Activated T-helper 1 cell treated with anti-CD3 and anti-CD28 coated beads, Interleukin-12 subunit alpha, Interleukin-12 subunit beta, Interleukin-2, Interleukin-4 antibody, amounts not matched to agents 30 ng/mL and 10 ng/mL and 1 ng/mL, durations not matched to agents 14 hours and 24 hours and 36 hours (primary cell): ENCODE measurements at regions of chr9 and their contacts with region 1.

Region 1: DNA sequence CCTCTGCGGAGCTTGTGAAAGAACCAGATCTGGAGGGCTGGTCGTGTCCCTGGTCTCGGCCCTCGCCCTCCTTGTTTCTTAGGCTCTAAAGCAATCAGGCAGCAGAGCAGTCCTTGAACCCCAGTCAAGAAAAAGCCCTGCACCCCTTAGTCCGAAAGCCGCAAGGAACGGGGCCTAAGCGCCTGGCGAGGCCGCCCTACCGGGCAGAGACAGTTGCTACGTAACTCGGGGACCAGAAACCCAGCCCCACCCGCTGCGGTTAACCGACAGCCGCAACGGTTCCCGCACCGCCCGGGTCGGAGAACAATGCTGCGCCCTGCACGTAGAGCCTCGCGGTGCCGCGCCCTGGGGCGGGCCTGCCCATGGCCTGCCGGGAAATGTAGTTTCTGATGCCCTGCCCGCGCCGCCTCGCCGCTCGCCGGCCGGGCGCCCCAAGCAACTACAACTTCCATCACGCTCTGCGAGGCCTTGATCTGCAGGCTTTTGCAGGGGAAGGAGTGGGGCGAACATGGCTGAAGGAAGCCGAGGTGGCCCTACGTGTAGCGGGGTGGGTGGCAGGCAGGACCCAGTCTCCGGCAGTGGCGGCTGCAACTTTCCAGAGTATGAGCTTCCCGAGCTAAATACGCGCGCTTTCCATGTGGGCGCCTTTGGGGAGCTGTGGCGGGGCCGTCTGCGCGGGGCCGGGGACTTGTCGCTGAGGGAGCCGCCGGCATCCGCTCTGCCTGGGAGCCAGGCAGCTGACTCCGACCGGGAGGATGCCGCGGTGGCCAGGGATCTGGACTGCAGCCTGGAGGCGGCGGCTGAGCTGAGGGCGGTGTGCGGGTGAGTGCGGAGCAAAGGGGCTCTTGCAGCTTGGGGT is at the start of gene SNAPC3:
- DNase-seq: peak; percentile 94
- H3K4me3 Mint-ChIP-seq: peak within 1 kb of the TSS; percentile 96
- H3K27ac Mint-ChIP-seq: peak within 1 kb of the TSS; percentile 92
- H3K4me1 Mint-ChIP-seq: peaks cover 50% of the 10 kb centered on the region
- H3K27me3 Mint-ChIP-seq: peaks cover 3% of the 10 kb centered on the region
- total RNA-seq, gene SNAPC3: 27.1 and 30.5 TPM in 2 replicates

Region 2: DNA sequence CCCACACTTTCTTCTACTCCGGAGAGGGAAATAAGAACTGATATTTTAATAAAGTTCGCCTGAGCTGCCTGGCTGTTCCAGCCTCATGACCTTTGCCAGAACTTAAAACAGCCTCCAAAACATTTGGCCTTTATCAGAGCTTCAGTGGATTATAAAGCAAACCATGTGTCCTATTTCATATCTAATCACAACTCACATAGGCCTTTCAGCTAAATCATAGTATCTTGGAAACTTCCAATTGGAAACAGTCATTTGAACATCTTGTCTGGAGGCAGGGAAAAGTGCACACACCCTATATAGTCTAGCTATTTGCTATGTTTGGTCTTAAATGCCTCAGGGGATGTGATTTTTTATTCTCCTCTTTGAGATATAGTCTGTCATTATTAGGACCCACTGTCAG is 466.4 kb before region 1 on chr9:
- intact Hi-C with region 1: loop called (anchors 5 kb)
- DNase-seq: no peak
- H3K4me3 Mint-ChIP-seq: no peak overlapping the region
- H3K27ac Mint-ChIP-seq: no peak overlapping the region
- H3K4me1 Mint-ChIP-seq: peaks cover 39% of the 10 kb centered on the region
- H3K27me3 Mint-ChIP-seq: peaks cover 10% of the 10 kb centered on the region

Region 3: GRCh38 chr9:15191378-15191777 is 231.2 kb before region 1 on chr9:
- intact Hi-C with region 1: loop called (anchors 1 kb)
- DNase-seq: no peak
- H3K4me3 Mint-ChIP-seq: peak overlapping the region; percentile 45
- H3K27ac Mint-ChIP-seq: peak overlapping the region; percentile 49
- H3K4me1 Mint-ChIP-seq: peaks cover 24% of the 10 kb centered on the region
- H3K27me3 Mint-ChIP-seq: no peaks in the 10 kb centered on the region

Region 4: GRCh38 chr9:15277400-15278090 is 145.1 kb before region 1 on chr9:
- intact Hi-C with region 1: loop called (anchors 1 kb)
- DNase-seq: no peak
- H3K4me3 Mint-ChIP-seq: no peak overlapping the region
- H3K27ac Mint-ChIP-seq: peak overlapping the region; percentile 60
- H3K4me1 Mint-ChIP-seq: peaks cover 28% of the 10 kb centered on the region
- H3K27me3 Mint-ChIP-seq: no peaks in the 10 kb centered on the region

Region 5: GRCh38 chr9:15293084-15293483 is 129.5 kb before region 1 on chr9:
- intact Hi-C with region 1: no loop called
- DNase-seq: no peak
- H3K4me3 Mint-ChIP-seq: peak overlapping the region; percentile 27
- H3K27ac Mint-ChIP-seq: peak overlapping the region; percentile 66
- H3K4me1 Mint-ChIP-seq: peaks cover 64% of the 10 kb centered on the region
- H3K27me3 Mint-ChIP-seq: no peaks in the 10 kb centered on the region

Region 6: GRCh38 chr9:15329539-15330109 is 93.0 kb before region 1 on chr9:
- intact Hi-C with region 1: no loop called
- DNase-seq: no peak
- H3K4me3 Mint-ChIP-seq: no peak overlapping the region
- H3K27ac Mint-ChIP-seq: no peak overlapping the region
- H3K4me1 Mint-ChIP-seq: no peaks in the 10 kb centered on the region
- H3K27me3 Mint-ChIP-seq: peaks cover 24% of the 10 kb centered on the region

Region 7: DNA sequence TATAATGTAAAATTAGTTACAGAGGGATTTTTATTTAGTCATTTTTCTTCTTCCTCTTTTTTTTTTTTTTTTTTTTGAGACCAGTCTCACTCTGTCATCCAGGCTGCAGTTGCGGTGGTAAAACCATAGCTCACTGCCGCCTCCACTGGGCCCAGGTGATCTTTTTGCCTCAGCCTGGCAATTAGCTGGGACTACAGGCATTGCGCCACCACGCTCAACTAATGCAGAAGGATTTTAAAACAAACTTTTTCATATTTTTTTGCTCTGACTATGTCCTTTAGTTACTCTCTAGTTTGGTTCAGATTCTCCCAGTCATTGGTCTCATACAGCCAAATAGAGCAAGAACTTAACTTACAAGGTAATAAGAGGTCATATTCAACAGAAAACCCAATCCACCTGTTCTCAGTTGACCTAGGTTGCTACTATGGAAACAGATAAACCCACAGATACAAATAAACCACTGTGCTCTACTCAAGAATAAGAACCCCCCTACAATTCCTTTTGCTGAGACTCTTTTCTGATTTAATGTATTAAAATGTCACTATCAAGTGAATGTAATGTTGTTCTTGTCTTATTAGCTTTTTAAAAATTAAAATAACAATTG is 65.4 kb before region 1 on chr9:
- intact Hi-C with region 1: loop called (anchors 2 kb)
- DNase-seq: peak; percentile 11
- H3K4me3 Mint-ChIP-seq: no peak overlapping the region
- H3K27ac Mint-ChIP-seq: no peak overlapping the region
- H3K4me1 Mint-ChIP-seq: peaks cover 16% of the 10 kb centered on the region
- H3K27me3 Mint-ChIP-seq: peaks cover 2% of the 10 kb centered on the region

Region 8: DNA sequence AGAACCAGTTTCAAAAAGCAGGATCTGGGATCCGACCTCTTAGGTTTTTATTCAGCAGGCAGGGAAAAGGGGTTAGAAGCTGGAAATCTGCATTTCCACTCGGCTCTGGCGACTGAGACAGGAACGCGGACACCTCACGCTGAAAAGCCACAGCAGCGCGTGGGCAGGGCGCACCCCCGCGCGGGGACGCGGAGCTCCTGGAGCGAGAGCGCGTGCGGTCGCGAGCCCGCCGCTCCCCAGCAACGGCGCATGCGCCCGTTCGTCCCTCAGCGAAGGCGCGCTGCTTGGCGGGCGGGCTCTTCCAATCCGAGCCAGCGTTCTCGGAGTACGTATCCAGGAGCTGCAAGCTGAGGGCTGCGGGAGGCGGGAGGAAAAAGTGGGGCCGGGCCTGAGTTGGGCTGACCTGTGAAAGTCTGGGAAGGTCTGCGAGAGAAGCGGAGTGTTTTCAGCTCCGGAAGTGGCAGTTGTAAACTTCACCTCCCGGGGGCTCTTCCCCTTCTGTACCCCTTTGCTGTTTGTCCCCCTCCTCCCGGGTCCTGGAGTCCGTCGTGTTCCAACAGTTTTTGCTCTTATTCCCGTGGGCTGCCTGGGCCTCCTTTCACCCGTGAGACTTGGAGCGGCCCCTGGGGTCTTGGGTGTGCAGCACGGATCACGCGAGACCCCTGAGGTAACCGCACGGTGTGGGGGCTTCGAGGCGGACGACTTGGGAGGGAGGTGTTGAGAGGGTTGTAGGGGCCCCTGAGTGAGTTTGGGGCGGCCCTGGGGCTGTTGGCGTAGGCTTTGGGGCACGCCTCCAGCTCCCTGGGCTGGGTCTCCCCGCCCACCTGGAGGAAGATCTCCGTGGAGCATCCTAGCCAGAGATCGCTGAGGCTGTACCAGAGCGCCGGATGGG is 130.3 kb after region 1 on chr9 and contains the start of gene CCDC171:
- intact Hi-C with region 1: loop called (anchors 1 kb)
- DNase-seq: peak; percentile 84
- H3K4me3 Mint-ChIP-seq: peak within 1 kb of the TSS; percentile 87
- H3K27ac Mint-ChIP-seq: peak within 1 kb of the TSS; percentile 75
- H3K4me1 Mint-ChIP-seq: peaks cover 20% of the 10 kb centered on the region
- H3K27me3 Mint-ChIP-seq: peaks cover 25% of the 10 kb centered on the region
- total RNA-seq, gene CCDC171: 1.4 and 2.0 TPM in 2 replicates